CD14-positive monocyte (primary cell): ENCODE measurements at regions of chr12 and their contacts with region 1.

Region 1: DNA sequence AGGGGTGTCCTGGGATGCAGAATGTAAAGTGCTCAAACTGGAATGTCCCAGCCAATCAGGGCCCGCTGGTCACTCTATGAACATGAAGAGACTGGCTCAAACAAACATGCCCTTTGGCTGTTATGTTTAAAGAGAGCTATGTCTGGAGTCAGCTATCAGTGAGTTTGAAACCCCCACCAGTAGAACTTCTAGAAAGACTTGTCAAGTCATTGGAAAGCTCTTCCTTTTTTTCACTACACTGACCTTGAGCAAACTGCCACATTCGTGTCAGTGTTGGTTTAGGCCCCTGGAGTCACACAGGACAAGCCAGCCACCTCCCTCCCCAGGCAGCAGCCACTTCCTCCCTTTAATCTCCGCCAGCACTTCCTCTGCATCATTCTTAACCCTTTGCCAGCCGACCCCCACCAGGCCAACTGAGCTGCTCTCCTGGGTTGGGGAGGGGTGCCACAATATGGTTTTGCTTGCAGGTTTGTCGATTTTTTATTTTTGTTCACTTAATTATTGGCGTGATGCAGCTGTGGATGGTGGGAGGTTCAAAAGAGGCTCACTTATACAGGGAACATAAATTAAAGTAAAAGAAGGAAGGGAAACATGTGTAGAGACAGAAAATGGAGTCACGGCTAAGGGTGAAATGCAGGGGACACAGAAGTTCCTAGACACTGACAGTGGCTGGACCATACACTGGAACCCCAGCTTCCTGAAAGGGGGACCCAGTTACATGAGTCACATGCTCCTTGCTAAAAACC is 25.3 kb downstream of the CMKLR1 start:
- DNase-seq: peak; percentile 89 to 96 (median 94)
- H3K4me3 ChIP-seq: peak overlapping the region in 2 of 3 experiments; percentile 6 to 63
- H3K4me3 Mint-ChIP-seq: peak overlapping the region; percentile 61 to 84
- H3K27ac ChIP-seq: peak overlapping the region; percentile 86 to 96
- H3K27ac Mint-ChIP-seq: peak overlapping the region; percentile 95 to 99 (median 97)
- H3K4me1 ChIP-seq: peaks cover 96 to 98% of the 10 kb centered on the region in 2 donors
- H3K4me1 Mint-ChIP-seq: peaks cover 93% of the 10 kb centered on the region
- H3K27me3 ChIP-seq: no peaks in the 10 kb centered on the region
- H3K27me3 Mint-ChIP-seq: peaks cover 0 to 1% (median 1%) of the 10 kb centered on the region in 3 donors
- CTCF ChIP-seq: no peak

Region 2: GRCh38 chr12:108333898-108334699 is 20.3 kb after region 1 on chr12:
- intact Hi-C with region 1: loop called in 1 of 2 experiments (anchors 2 kb)
- DNase-seq: peak; percentile 57 to 97 (median 70)
- H3K4me3 ChIP-seq: peak overlapping the region in 1 of 3 experiments; percentile 18
- H3K4me3 Mint-ChIP-seq: peak overlapping the region in 1 of 2 donors; percentile 53
- H3K27ac ChIP-seq: peak overlapping the region; percentile 90 to 95
- H3K27ac Mint-ChIP-seq: peak overlapping the region; percentile 94 to 99 (median 97)
- H3K4me1 ChIP-seq: peaks cover 65 to 84% of the 10 kb centered on the region in 2 donors
- H3K4me1 Mint-ChIP-seq: peaks cover 81% of the 10 kb centered on the region
- H3K27me3 ChIP-seq: no peaks in the 10 kb centered on the region
- H3K27me3 Mint-ChIP-seq: peaks cover 0 to 3% (median 3%) of the 10 kb centered on the region in 3 donors
- CTCF ChIP-seq: no peak

Region 3: GRCh38 chr12:108367436-108367835 is 53.7 kb after region 1 on chr12:
- intact Hi-C with region 1: loop called in 1 of 2 experiments (anchors 5 kb)
- DNase-seq: peak; percentile 80 to 91 (median 87)
- H3K4me3 ChIP-seq: peak overlapping the region in 1 of 3 experiments; percentile 51
- H3K4me3 Mint-ChIP-seq: peak overlapping the region; percentile 45 to 59
- H3K27ac ChIP-seq: peak overlapping the region; percentile 67 to 88
- H3K27ac Mint-ChIP-seq: peak overlapping the region; percentile 83 to 96 (median 90)
- H3K4me1 ChIP-seq: peaks cover 76 to 90% of the 10 kb centered on the region in 2 donors
- H3K4me1 Mint-ChIP-seq: peaks cover 81% of the 10 kb centered on the region
- H3K27me3 ChIP-seq: no peaks in the 10 kb centered on the region
- H3K27me3 Mint-ChIP-seq: peaks cover 1 to 6% (median 3%) of the 10 kb centered on the region in 3 donors
- CTCF ChIP-seq: no peak

Region 4: GRCh38 chr12:108403952-108404351 is 90.2 kb after region 1 on chr12:
- intact Hi-C with region 1: no loop called
- DNase-seq: no peak
- H3K4me3 ChIP-seq: no peak overlapping the region
- H3K4me3 Mint-ChIP-seq: no peak overlapping the region
- H3K27ac ChIP-seq: no peak overlapping the region
- H3K27ac Mint-ChIP-seq: no peak overlapping the region
- H3K4me1 ChIP-seq: no peaks in the 10 kb centered on the region
- H3K4me1 Mint-ChIP-seq: no peaks in the 10 kb centered on the region
- H3K27me3 ChIP-seq: peaks cover 2 to 5% of the 10 kb centered on the region in 2 donors
- H3K27me3 Mint-ChIP-seq: peaks cover 3 to 29% (median 10%) of the 10 kb centered on the region in 3 donors
- CTCF ChIP-seq: no peak

Region 5: GRCh38 chr12:108633534-108634248 is 319.9 kb after region 1 on chr12 and contains the start of gene SELPLG:
- intact Hi-C with region 1: loop called in 1 of 2 experiments (anchors 10 kb)
- DNase-seq: peak; percentile 90 to 94 (median 92)
- H3K4me3 ChIP-seq: peak within 1 kb of the TSS; percentile 55 to 88 (median 83)
- H3K4me3 Mint-ChIP-seq: peak within 1 kb of the TSS; percentile 96 to 98
- H3K27ac ChIP-seq: peak within 1 kb of the TSS; percentile 98 to 99
- H3K27ac Mint-ChIP-seq: peak within 1 kb of the TSS; percentile 98 to 100 (median 100)
- H3K4me1 ChIP-seq: peaks cover 96% of the 10 kb centered on the region in 2 donors
- H3K4me1 Mint-ChIP-seq: peaks cover 90% of the 10 kb centered on the region
- H3K27me3 ChIP-seq: no peaks in the 10 kb centered on the region
- H3K27me3 Mint-ChIP-seq: no peaks in the 10 kb centered on the region
- CTCF ChIP-seq: peak; percentile 30
- polyA plus RNA-seq, gene SELPLG: 193 to 349 (median 247) TPM